ENCODE measurements at regions of chr10 and their contacts with region 1.

Region 1: DNA sequence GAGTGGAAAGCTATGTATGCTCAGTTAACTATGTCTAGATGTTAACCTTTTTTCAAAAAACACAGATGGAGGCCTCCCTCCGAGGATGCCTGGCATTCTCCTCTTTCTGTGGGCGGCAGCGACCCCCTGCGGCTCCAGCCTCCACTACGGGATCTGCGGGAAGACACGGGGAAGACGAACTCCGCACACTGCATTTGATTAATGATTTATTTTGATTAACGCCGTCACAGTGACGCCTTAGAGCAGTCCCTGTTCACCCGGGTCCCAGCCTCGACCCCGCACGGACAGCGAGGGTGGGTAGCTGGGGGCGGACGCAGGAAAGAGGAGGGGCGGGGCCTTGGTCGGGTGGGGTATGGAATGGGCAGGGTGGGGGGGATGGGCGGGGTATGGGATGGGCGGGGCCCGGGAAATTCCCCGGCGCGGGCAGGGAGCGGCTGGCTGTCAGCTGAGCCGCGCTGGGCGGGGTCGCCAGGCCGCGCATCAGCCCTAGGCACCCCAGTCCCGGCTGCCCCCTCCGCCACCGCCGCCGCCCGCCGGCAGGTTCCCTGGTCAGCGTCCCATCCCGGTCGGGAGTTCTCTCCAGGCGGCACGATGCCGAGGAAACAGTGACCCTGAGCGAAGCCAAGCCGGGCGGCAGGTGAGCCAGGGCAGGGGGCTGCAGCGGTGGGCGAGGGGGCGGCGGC is at the start of gene OPTN:
- DNase-seq: peak; percentile 61 to 77
- H3K4me3 ChIP-seq: peak within 1 kb of the TSS; percentile 70
- H3K27ac ChIP-seq: peak within 1 kb of the TSS; percentile 38; the same call in 1 of the 2 replicates
- H3K4me1 ChIP-seq: 0 out of 2 replicates have a peak, but pooled peaks cover 3% of the 10 kb centered on the region
- H3K27me3 ChIP-seq: no peaks in the 10 kb centered on the region
- CTCF ChIP-seq: peak; percentile 71
- total RNA-seq, gene OPTN: 26.6 and 26.8 TPM in 2 replicates

Region 2: DNA sequence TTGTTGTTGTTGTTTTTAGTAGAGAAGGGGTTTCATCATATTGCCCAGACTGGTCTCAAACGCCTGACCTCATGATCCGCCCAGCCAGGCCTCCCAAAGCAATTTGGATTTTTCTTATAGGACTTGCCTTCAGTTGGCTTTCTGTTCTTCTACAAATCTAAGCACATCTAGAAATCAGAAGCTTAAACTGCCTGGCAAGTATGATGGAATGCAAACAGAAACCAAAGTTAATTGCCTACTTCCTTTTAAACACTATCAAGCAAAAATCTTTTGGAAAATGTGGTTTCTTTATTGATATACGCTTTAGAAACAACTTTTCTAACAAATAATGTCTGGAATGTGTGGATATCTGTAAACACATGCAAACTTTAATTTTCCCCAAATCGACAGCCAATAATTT is 1553.2 kb before region 1 on chr10:
- CTCF ChIA-PET with region 1: no interaction called
- POLR2A ChIA-PET with region 1: interaction called, 16 read pairs
- intact Hi-C with region 1: no loop called
- DNase-seq: peak in 1 of 2 experiments; percentile 39
- H3K4me3 ChIP-seq: no peak overlapping the region
- H3K27ac ChIP-seq: peak overlapping the region; percentile 32; the same call in 1 of the 2 replicates
- H3K4me1 ChIP-seq: peaks cover 10% of the 10 kb centered on the region
- H3K27me3 ChIP-seq: no peaks in the 10 kb centered on the region
- CTCF ChIP-seq: no peak

Region 3: GRCh38 chr10:13120786-13121499 is 21.1 kb after region 1 on chr10:
- CTCF ChIA-PET with region 1: no interaction called
- POLR2A ChIA-PET with region 1: interaction called, 41 read pairs
- intact Hi-C with region 1: no loop called
- DNase-seq: no peak
- H3K4me3 ChIP-seq: no peak overlapping the region
- H3K27ac ChIP-seq: no peak overlapping the region
- H3K4me1 ChIP-seq: no peaks in the 10 kb centered on the region
- H3K27me3 ChIP-seq: no peaks in the 10 kb centered on the region
- CTCF ChIP-seq: no peak

Region 4: GRCh38 chr10:13183625-13184024 is 83.8 kb after region 1 on chr10:
- CTCF ChIA-PET with region 1: no interaction called
- POLR2A ChIA-PET with region 1: interaction called, 10 read pairs
- intact Hi-C with region 1: no loop called
- DNase-seq: no peak
- H3K4me3 ChIP-seq: no peak overlapping the region
- H3K27ac ChIP-seq: no peak overlapping the region
- H3K4me1 ChIP-seq: no peaks in the 10 kb centered on the region
- H3K27me3 ChIP-seq: no peaks in the 10 kb centered on the region
- CTCF ChIP-seq: no peak

Region 5: DNA sequence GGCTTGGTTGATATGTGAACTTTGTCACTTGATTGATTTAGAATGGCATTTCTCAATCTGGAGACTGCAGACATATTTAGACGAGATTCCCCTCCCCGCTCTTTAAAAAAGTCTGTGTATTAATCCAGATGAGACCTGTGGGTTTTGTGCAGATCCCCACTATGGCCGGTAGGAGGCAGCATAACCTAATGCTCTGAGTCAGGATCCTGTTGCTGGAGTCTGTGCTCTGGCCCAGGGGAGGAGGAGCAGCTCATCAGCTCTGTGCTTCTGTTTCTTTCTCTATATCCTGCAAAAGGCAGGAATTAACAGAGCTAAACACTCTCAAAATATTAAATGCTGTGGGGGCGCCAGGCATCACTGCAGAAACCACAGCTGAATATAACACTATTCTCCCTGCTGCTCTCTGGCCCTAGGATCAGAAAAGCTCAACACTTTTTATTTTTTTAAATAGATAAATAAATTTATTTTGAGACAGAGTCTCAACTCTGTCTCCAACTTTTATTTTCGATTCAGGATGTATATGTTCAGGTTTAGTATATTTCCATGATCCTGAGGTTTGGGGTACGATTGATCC is 272.2 kb after region 1 on chr10:
- CTCF ChIA-PET with region 1: no interaction called
- POLR2A ChIA-PET with region 1: no interaction called
- intact Hi-C with region 1: no loop called
- DNase-seq: peak; percentile 41 to 66
- H3K4me3 ChIP-seq: no peak overlapping the region
- H3K27ac ChIP-seq: no peak overlapping the region
- H3K4me1 ChIP-seq: no peaks in the 10 kb centered on the region
- H3K27me3 ChIP-seq: no peaks in the 10 kb centered on the region
- CTCF ChIP-seq: peak; percentile 84

Region 6: GRCh38 chr10:13613519-13613918 is 513.7 kb after region 1 on chr10:
- CTCF ChIA-PET with region 1: interaction called, 14 read pairs
- POLR2A ChIA-PET with region 1: no interaction called
- intact Hi-C with region 1: no loop called
- DNase-seq: no peak
- H3K4me3 ChIP-seq: no peak overlapping the region
- H3K27ac ChIP-seq: no peak overlapping the region
- H3K4me1 ChIP-seq: peaks cover 17% of the 10 kb centered on the region
- H3K27me3 ChIP-seq: no peaks in the 10 kb centered on the region
- CTCF ChIP-seq: peak; percentile 64

Measured in PC-9 (cell line).